A549 (cell line): ENCODE measurements at regions of chr1 and their contacts with region 1.

Region 1: GRCh38 chr1:11784993-11785769 is 20.6 kb downstream of the MTHFR start:
- DNase-seq: peak; percentile 63 to 71
- ATAC-seq: peak; percentile 74 to 93
- H3K4me3 ChIP-seq: peak overlapping the region; percentile 19; the same call in 1 of the 3 replicates
- H3K27ac ChIP-seq: peak overlapping the region; percentile 38 to 77; a peak in 4 of 6 replicates
- H3K4me1 ChIP-seq: peaks cover 10% of the 10 kb centered on the region
- CTCF ChIP-seq: peak; percentile 66
- EP300 ChIP-seq: no peak
- POLR2A ChIP-seq: no peak
- RAD21 ChIP-seq: peak in 1 of 2 experiments; percentile 31; a peak in 3 of 5 replicates

Region 2: DNA sequence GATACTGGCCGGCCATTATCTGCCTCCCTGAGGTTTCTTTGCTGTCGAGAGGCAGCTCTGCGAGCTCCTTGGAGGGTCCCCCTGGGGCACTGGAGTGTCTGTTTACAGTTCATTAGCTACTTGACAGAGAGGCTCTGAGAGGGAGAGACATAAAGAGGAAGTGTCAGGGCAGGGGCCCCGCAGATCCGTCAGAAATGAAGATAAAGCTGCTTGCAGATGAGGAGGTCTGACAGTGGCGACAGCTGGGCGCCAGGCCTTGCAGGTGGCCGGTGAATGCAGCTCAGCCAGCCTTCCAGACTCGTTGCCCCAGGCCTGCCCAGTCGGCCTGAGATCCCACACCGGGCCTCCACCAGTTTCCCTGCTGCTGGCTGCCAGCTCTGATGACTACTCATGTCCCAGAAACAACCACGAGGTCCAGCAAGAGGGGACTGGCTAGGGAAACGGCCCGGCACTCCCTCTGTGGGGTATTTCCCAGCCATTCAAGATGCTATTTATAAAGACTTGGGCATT is 221.6 kb before region 1 on chr1:
- CTCF ChIA-PET with region 1: no interaction called
- POLR2A ChIA-PET with region 1: no interaction called
- DNase-seq: no peak
- ATAC-seq: 0 out of 6 replicates have a peak, but pooled peaks of 1 of the 2 experiments have one; percentile 24
- H3K4me3 ChIP-seq: no peak overlapping the region
- H3K27ac ChIP-seq: no peak overlapping the region
- H3K4me1 ChIP-seq: no peaks in the 10 kb centered on the region
- CTCF ChIP-seq: no peak
- EP300 ChIP-seq: no peak
- POLR2A ChIP-seq: no peak
- RAD21 ChIP-seq: no peak

Region 3: GRCh38 chr1:11772458-11772857 is 12.7 kb before region 1 on chr1:
- CTCF ChIA-PET with region 1: interaction called, 26 read pairs
- POLR2A ChIA-PET with region 1: no interaction called
- DNase-seq: no peak
- ATAC-seq: no peak
- H3K4me3 ChIP-seq: no peak overlapping the region
- H3K27ac ChIP-seq: no peak overlapping the region
- H3K4me1 ChIP-seq: no peaks in the 10 kb centered on the region
- CTCF ChIP-seq: no peak
- EP300 ChIP-seq: no peak
- POLR2A ChIP-seq: no peak
- RAD21 ChIP-seq: no peak

Region 4: DNA sequence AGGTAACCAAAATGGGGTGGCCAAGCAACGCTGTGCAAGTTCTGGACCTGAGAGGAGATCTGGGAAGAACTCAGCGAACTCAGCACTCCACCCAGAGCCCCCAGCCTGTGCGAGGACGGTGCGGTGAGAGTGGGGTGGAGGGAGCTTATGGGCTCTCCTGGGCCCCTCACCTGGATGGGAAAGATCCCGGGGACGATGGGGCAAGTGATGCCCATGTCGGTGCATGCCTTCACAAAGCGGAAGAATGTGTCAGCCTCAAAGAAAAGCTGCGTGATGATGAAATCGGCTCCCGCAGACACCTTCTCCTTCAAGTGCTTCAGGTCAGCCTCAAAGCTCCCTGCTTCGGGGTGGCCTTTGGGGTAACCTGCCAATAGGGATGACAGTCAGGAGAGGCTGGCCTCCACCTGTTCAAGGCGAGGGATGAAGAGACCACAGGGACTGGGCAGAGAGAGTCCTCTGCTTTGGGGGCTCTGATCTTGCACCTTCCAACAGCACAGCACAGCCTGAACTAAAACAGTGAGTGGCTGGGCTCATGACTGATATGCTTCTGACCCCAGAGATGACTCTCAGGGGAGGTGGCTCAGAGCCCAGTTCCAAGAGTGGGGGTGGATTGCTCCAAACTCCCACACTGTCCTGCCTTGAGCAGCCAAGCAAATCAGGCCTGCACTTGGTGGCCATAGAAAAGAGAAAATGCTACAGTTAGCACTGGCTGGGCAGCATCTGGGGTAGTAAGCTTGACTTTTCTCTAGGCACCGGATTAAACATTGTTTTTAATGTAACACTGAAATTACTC is 11.1 kb after region 1 on chr1:
- CTCF ChIA-PET with region 1: interaction called, 15 read pairs
- POLR2A ChIA-PET with region 1: interaction called, 4 read pairs
- DNase-seq: no peak
- ATAC-seq: no peak
- H3K4me3 ChIP-seq: no peak overlapping the region
- H3K27ac ChIP-seq: no peak overlapping the region
- H3K4me1 ChIP-seq: peaks cover 4% of the 10 kb centered on the region
- CTCF ChIP-seq: no peak
- EP300 ChIP-seq: no peak
- POLR2A ChIP-seq: no peak
- RAD21 ChIP-seq: no peak

Region 5: GRCh38 chr1:11893907-11894251 is 108.7 kb after region 1 on chr1:
- CTCF ChIA-PET with region 1: no interaction called
- POLR2A ChIA-PET with region 1: no interaction called
- DNase-seq: peak; percentile 42 to 80
- ATAC-seq: peak; percentile 90 to 94
- H3K4me3 ChIP-seq: no peak overlapping the region
- H3K27ac ChIP-seq: no peak overlapping the region
- H3K4me1 ChIP-seq: no peaks in the 10 kb centered on the region
- CTCF ChIP-seq: peak; percentile 57
- EP300 ChIP-seq: no peak
- POLR2A ChIP-seq: no peak
- RAD21 ChIP-seq: peak; percentile 61 to 80